ENCODE measurements at regions of chr2 and their contacts with region 1.

Region 1: GRCh38 chr2:38750891-38751595 is at the start of gene SRSF7:
- DNase-seq: peak; percentile 99 to 100
- ATAC-seq: peak; percentile 87 to 90
- H3K4me3 ChIP-seq: peak within 1 kb of the TSS; percentile 84
- H3K27ac ChIP-seq: peak within 1 kb of the TSS; percentile 96 to 98
- H3K4me1 ChIP-seq: peaks cover 40% of the 10 kb centered on the region
- CTCF ChIP-seq: no peak
- EP300 ChIP-seq: no peak
- POLR2A ChIP-seq: peak; percentile 100
- RAD21 ChIP-seq: 0 out of 5 replicates have a peak, but pooled peaks of 1 of the 2 experiments have one; percentile 17
- polyA plus RNA-seq, gene SRSF7: 356 and 544 TPM in 2 replicates

Region 2: GRCh38 chr2:38554973-38555595 is 196.0 kb before region 1 on chr2:
- CTCF ChIA-PET with region 1: no interaction called
- POLR2A ChIA-PET with region 1: interaction called, 11 read pairs
- DNase-seq: peak; percentile 31 to 54
- ATAC-seq: peak; percentile 87 to 89
- H3K4me3 ChIP-seq: no peak overlapping the region
- H3K27ac ChIP-seq: no peak overlapping the region
- H3K4me1 ChIP-seq: no peaks in the 10 kb centered on the region
- CTCF ChIP-seq: peak; percentile 58
- EP300 ChIP-seq: no peak
- POLR2A ChIP-seq: no peak
- RAD21 ChIP-seq: peak; percentile 37; a peak in 3 of 5 replicates

Region 3: DNA sequence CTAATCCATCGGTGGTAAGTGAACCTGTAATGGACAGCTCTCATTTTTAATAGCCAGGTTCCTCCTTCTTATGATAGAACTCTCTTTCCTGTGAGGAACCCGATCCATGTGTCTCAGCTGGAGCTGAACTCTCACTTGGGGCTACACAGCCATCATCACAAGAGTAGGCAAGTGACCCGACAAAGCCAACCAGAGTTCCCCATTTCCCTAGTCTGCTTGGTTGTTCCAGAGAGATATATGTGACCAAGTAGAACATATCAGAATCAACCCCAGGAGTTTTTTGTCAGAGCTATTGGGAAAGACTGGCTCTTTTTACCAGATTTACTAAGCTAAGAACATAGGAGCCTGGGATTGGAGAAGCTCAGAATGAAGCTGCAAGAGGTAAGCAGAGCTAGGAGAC is 133.7 kb before region 1 on chr2:
- CTCF ChIA-PET with region 1: no interaction called
- POLR2A ChIA-PET with region 1: interaction called, 20 read pairs
- DNase-seq: no peak
- ATAC-seq: no peak
- H3K4me3 ChIP-seq: no peak overlapping the region
- H3K27ac ChIP-seq: no peak overlapping the region
- H3K4me1 ChIP-seq: peaks cover 6% of the 10 kb centered on the region; the same call in 2 of the 3 replicates
- CTCF ChIP-seq: no peak
- EP300 ChIP-seq: no peak
- POLR2A ChIP-seq: no peak
- RAD21 ChIP-seq: no peak

Region 4: GRCh38 chr2:38771632-38772031 is 20.6 kb after region 1 on chr2:
- CTCF ChIA-PET with region 1: interaction called, 9 read pairs
- POLR2A ChIA-PET with region 1: interaction called, 84 read pairs
- DNase-seq: peak in 1 of 2 experiments; percentile 52
- ATAC-seq: peak; percentile 65 to 71; a peak in 4 of 6 replicates
- H3K4me3 ChIP-seq: no peak overlapping the region
- H3K27ac ChIP-seq: peak overlapping the region; percentile 6 to 65; a peak in 3 of 6 replicates
- H3K4me1 ChIP-seq: peaks cover 11% of the 10 kb centered on the region; the same call in 2 of the 3 replicates
- CTCF ChIP-seq: no peak
- EP300 ChIP-seq: no peak
- POLR2A ChIP-seq: no peak
- RAD21 ChIP-seq: no peak

Region 5: GRCh38 chr2:38818565-38818964 is 67.5 kb after region 1 on chr2:
- CTCF ChIA-PET with region 1: no interaction called
- POLR2A ChIA-PET with region 1: interaction called, 19 read pairs
- DNase-seq: no peak
- ATAC-seq: peak in 1 of 2 experiments; percentile 52; a peak in 3 of 6 replicates
- H3K4me3 ChIP-seq: no peak overlapping the region
- H3K27ac ChIP-seq: no peak overlapping the region
- H3K4me1 ChIP-seq: no peaks in the 10 kb centered on the region
- CTCF ChIP-seq: no peak
- EP300 ChIP-seq: no peak
- POLR2A ChIP-seq: no peak
- RAD21 ChIP-seq: peak; percentile 9 to 17; a peak in 1 of 5 replicates

Region 6: DNA sequence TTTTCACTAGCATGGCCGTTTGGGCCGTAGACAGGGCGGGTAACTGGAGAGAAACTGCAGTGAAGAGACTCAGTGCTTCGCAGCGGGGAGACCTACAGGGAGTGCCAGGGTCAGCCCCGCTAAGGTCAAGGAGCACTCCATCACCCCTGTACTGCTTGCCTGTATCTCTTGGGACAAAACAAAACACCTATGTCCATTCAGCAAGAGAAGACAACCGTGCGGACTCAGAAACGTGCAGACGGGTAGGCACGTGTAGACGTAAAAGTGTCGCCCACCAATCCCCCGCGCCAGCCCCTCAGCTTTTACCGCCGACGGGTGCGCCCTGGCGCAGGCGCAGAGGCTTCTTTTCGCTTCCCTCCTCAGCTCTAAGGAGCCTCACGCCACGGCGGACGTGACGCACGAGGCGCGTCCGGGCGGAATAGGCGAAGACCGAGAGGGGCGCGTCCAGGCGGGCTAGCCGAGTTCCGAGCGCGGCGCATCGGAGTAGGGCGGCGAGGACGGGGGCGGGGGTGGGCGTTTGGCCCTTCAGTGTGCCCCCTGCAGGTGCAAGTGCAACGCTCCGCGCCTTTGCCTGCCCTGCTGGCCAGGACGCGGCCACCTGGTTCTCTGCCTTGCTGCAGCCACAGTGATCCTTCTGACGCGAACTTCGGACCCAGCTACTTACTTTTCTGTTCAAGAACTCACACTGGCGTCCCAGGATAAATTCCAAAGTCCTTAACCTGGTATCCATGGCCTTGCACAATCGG is 373.1 kb after region 1 on chr2:
- CTCF ChIA-PET with region 1: no interaction called
- POLR2A ChIA-PET with region 1: interaction called, 14 read pairs
- DNase-seq: peak; percentile 89 to 99
- ATAC-seq: peak; percentile 73 to 88
- H3K4me3 ChIP-seq: peak overlapping the region; percentile 61
- H3K27ac ChIP-seq: peak overlapping the region; percentile 84 to 89
- H3K4me1 ChIP-seq: peaks cover 14% of the 10 kb centered on the region; the same call in 2 of the 3 replicates
- CTCF ChIP-seq: peak; percentile 65
- EP300 ChIP-seq: no peak
- POLR2A ChIP-seq: peak; percentile 77
- RAD21 ChIP-seq: peak in 1 of 2 experiments; percentile 68; a peak in 3 of 5 replicates

Measured in A549 (cell line).